ENCODE measurements at regions of chr12 and their contacts with region 1.

Region 1: DNA sequence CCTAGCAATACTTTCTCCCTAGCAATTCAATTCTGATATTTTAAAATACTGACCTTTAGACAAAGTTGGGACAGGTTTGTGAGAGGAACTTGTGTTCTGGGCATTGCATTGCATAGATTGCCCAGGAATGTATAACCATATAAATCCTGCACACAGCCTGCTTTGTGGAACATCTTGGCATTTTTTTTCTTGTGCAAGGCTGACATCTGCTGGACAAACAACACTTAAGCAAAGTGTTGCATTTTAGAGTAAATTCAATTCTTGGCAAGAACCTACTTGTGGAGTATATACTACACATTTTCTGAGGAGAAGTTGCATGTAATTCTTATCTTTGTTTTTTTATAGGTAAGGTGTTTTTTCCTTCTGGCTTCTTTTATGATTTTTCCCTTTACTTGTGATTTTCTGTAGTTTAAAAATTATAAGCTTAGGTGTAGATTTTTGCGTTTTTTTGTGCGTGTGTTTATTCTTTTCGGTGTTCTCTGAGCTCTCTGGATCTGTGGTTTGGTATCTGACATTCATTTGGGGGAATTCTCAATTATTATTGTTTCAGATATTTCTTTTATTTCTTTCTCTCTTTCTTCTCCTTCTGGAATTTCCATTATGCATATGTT is 26.4 kb downstream of the TESPA1 start:
- DNase-seq: peak; percentile 55
- H3K4me3 Mint-ChIP-seq: no peak overlapping the region
- H3K27ac Mint-ChIP-seq: peak overlapping the region; percentile 93
- H3K4me1 Mint-ChIP-seq: peaks cover 86% of the 10 kb centered on the region
- H3K27me3 Mint-ChIP-seq: no peaks in the 10 kb centered on the region

Region 2: GRCh38 chr12:54701940-54702592 is 256.1 kb before region 1 on chr12:
- CTCF ChIA-PET with region 1: interaction called, 33 read pairs
- POLR2A ChIA-PET with region 1: no interaction called
- intact Hi-C with region 1: no loop called
- DNase-seq: no peak
- H3K4me3 Mint-ChIP-seq: no peak overlapping the region
- H3K27ac Mint-ChIP-seq: no peak overlapping the region
- H3K4me1 Mint-ChIP-seq: no peaks in the 10 kb centered on the region
- H3K27me3 Mint-ChIP-seq: peaks cover 4% of the 10 kb centered on the region

Region 3: GRCh38 chr12:54759751-54760150 is 198.4 kb before region 1 on chr12:
- CTCF ChIA-PET with region 1: interaction called, 12 read pairs
- POLR2A ChIA-PET with region 1: no interaction called
- intact Hi-C with region 1: no loop called
- DNase-seq: no peak
- H3K4me3 Mint-ChIP-seq: no peak overlapping the region
- H3K27ac Mint-ChIP-seq: no peak overlapping the region
- H3K4me1 Mint-ChIP-seq: peaks cover 6% of the 10 kb centered on the region
- H3K27me3 Mint-ChIP-seq: no peaks in the 10 kb centered on the region

Region 4: DNA sequence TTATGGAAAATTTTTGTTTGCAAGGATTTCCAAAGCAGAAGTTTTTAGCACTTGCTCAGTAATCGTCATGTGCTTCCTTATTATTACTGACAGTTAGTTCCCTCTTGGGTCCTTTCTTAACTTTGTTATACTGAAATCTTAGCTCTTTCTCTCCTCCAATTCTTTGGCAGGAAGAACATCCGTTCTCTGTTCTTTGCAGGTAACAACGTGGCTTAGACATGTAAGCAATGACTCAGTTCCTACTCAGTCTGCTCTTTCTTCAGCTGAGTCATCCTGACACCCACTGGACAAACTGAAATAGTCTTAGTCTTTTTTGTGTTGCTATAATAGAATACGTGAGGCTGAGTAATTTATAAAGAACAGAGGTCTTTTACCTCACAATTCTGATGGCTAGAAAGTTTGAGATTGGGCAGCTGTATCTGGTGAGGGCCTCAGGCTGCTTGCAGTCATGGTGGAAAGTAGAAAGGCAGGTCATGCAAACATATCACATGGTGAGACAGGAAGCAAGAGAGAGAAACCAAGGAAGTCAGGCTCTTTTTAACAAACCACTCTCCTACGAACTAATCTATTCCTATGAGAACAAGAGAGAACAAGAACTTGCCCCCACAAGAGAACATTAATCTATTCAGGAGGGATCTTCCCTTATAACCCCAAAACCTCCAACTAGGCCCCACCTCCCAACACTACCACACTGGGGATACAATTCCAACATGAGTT is 22.8 kb before region 1 on chr12:
- CTCF ChIA-PET with region 1: interaction called, 29 read pairs
- POLR2A ChIA-PET with region 1: interaction called, 5 read pairs
- intact Hi-C with region 1: loop called (anchors 1 kb)
- DNase-seq: peak; percentile 72
- H3K4me3 Mint-ChIP-seq: peak overlapping the region; percentile 53
- H3K27ac Mint-ChIP-seq: peak overlapping the region; percentile 98
- H3K4me1 Mint-ChIP-seq: peaks cover 58% of the 10 kb centered on the region
- H3K27me3 Mint-ChIP-seq: no peaks in the 10 kb centered on the region

Region 5: GRCh38 chr12:54984658-54985376 is 26.7 kb after region 1 on chr12 and contains the start of gene TESPA1:
- CTCF ChIA-PET with region 1: interaction called, 40 read pairs
- POLR2A ChIA-PET with region 1: interaction called, 5 read pairs
- intact Hi-C with region 1: loop called (anchors 1 kb)
- DNase-seq: peak; percentile 93
- H3K4me3 Mint-ChIP-seq: peak within 1 kb of the TSS; percentile 79
- H3K27ac Mint-ChIP-seq: peak within 1 kb of the TSS; percentile 90
- H3K4me1 Mint-ChIP-seq: peaks cover 68% of the 10 kb centered on the region
- H3K27me3 Mint-ChIP-seq: no peaks in the 10 kb centered on the region
- total RNA-seq, gene TESPA1: 73.9 to 74.8 TPM

Region 6: GRCh38 chr12:55019779-55020178 is 61.6 kb after region 1 on chr12 and contains the start of gene NEUROD4:
- CTCF ChIA-PET with region 1: no interaction called
- POLR2A ChIA-PET with region 1: no interaction called
- intact Hi-C with region 1: no loop called
- DNase-seq: peak; percentile 32
- H3K4me3 Mint-ChIP-seq: no peak within 1 kb of the TSS
- H3K27ac Mint-ChIP-seq: no peak within 1 kb of the TSS
- H3K4me1 Mint-ChIP-seq: peaks cover 5% of the 10 kb centered on the region
- H3K27me3 Mint-ChIP-seq: peaks cover 35% of the 10 kb centered on the region
- total RNA-seq, gene NEUROD4: not detected

Measured in activated CD4-positive, alpha-beta memory T cell treated with anti-CD3 and anti-CD28 coated beads for 36 hours (primary cell).